Sigmoid colon (tissue), 7 donors: ENCODE measurements at regions of chr3 and their contacts with region 1.

Region 1: DNA sequence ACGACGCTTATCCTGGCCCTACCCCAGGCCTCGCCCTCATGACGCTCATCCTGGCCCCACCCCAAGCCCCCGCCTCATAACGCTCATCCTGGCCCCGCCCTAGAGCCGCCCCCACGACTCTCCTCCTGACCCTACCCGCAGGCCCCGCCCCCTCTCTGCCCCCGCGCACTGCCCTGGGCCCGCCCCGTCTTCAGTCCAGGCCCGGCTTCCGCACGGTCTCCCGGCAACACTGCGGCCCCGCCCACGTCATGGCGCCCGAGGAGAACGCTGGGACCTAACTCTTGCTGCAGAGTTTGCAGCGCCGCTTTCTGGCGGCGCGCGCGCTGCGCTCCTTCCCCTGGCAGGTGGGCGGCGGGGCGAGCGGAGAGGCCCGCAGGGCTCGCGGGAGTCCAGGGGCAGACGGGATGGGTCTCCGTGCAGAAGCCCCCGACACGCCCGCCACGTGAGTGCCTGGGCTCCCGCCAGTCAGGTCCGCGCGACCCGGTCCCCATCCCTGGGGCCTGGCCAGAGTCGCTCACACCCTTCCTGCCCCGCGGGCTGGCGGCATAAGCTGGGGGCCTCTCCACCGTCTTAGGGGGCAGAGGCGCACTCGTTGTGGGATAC is 52.5 kb upstream of the ROPN1B start:
- DNase-seq: no peak
- H3K4me3 ChIP-seq: peak overlapping the region; percentile 59 to 95 (median 79)
- H3K27ac ChIP-seq: peak overlapping the region; percentile 89 to 95 (median 91)
- H3K4me1 ChIP-seq: peaks cover 0 to 18% (median 10%) of the 10 kb centered on the region in 4 donors
- H3K27me3 ChIP-seq: no peaks in the 10 kb centered on the region
- CTCF ChIP-seq: no peak
- EP300 ChIP-seq: no peak
- POLR2A ChIP-seq: no peak

Region 2: DNA sequence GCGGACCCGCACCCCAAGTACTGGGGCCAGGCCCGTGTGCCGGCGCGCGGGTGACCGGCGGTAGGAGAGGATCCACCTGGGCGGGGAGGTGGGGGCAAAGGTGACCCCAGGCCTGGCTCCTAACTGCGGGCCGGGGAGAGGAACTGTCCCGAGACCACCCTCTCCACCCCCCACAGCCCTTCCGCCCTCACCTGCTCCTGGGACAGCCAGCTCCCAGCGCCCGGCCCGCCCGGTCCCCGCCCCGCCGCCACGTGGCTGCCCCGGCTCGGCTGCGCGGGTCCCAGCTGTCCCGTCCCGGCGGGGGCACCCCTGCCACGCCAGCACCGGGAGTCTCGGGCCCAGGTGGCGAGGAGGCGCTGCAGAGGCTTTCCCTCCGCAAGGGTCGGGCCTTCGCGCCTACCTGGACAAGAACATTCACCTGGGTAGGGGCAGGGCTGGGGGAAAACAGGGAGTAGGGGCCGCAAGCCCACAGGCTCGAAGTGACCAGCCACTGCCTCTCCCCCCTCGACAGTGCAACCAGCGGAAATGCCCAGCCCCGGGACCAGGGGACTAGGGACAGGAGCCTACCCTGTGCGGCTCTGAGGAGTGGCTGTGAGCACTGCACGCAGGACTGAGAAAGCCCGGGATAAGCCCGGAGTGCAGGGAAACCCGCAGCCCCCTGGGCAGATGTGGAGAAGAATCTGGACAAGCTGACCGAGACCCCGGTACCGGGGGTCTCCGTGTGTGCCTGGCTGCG is 703.8 kb before region 1 on chr3 and contains the start of gene SLC12A8:
- intact Hi-C with region 1: no loop called
- DNase-seq: no peak
- H3K4me3 ChIP-seq: peak within 1 kb of the TSS; percentile 12 to 48 (median 42)
- H3K27ac ChIP-seq: no peak within 1 kb of the TSS
- H3K4me1 ChIP-seq: peaks cover 0 to 14% (median 14%) of the 10 kb centered on the region in 4 donors
- H3K27me3 ChIP-seq: peaks cover 19 to 46% (median 20%) of the 10 kb centered on the region in 3 donors
- CTCF ChIP-seq: no peak
- EP300 ChIP-seq: no peak
- POLR2A ChIP-seq: no peak
- total RNA-seq, gene SLC12A8: 0.33 TPM in 1 of 4 donors, not detected in the others

Region 3: GRCh38 chr3:125767641-125768040 is 148.8 kb before region 1 on chr3:
- intact Hi-C with region 1: loop called (anchors 2 kb)
- DNase-seq: no peak
- H3K4me3 ChIP-seq: no peak overlapping the region
- H3K27ac ChIP-seq: no peak overlapping the region
- H3K4me1 ChIP-seq: peaks cover 0 to 11% (median 0%) of the 10 kb centered on the region in 4 donors
- H3K27me3 ChIP-seq: peaks cover 0 to 8% (median 0%) of the 10 kb centered on the region in 3 donors
- CTCF ChIP-seq: no peak
- EP300 ChIP-seq: no peak
- POLR2A ChIP-seq: no peak

Region 4: GRCh38 chr3:126052196-126053058 is 135.9 kb after region 1 on chr3:
- intact Hi-C with region 1: no loop called
- DNase-seq: no peak
- H3K4me3 ChIP-seq: no peak overlapping the region
- H3K27ac ChIP-seq: no peak overlapping the region
- H3K4me1 ChIP-seq: no peaks in the 10 kb centered on the region
- H3K27me3 ChIP-seq: no peaks in the 10 kb centered on the region
- CTCF ChIP-seq: no peak
- EP300 ChIP-seq: no peak
- POLR2A ChIP-seq: no peak

Region 5: DNA sequence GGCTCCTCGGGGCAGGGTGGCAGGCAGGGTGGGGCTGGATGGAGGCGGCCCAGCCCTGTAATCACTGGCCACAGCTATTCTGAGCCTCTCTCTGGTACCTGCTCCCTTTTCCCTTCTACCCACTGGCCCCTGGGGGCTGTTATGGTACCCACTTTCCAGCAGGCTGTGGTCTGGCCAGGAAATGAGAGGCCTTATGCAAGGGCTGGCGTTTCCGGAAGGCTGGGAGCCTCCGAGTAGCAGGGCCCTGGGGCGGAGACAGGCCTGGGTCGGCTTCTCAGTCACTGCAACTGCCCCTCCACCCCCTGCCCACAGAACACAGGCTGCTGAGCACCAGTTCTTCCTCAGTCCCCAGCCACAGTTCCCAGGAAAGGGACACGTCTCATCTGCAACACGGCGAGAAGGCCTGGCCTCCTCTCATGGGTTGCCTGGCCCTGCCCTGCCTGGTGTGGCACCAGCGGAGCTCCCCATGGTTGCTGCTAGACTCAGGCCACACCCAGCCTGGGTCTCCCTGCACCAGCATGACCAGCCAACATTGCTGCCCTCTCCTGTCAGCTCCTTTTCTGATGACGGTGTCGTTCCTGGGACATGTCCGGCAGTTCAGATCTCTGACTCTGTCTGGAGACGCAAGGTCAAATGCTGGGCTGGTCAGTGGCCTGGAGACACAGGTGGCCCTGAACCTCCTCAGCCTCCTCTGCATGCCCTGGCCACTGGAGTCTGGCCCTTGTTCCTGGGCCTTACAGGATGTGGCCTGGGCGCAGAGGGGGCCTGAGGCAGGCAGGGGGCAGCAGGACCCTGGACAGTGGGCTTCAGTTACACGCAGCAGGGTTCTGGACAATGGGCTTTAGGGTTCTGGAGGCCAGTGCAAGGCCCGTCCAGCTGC is 613.9 kb after region 1 on chr3:
- intact Hi-C with region 1: no loop called
- DNase-seq: peak; percentile 68
- H3K4me3 ChIP-seq: no peak overlapping the region
- H3K27ac ChIP-seq: peak overlapping the region in 1 of 4 donors; percentile 46
- H3K4me1 ChIP-seq: no peaks in the 10 kb centered on the region
- H3K27me3 ChIP-seq: peaks cover 0 to 7% (median 0%) of the 10 kb centered on the region in 3 donors
- CTCF ChIP-seq: no peak
- EP300 ChIP-seq: no peak
- POLR2A ChIP-seq: no peak